CD4-positive, alpha-beta memory T cell (primary cell): ENCODE measurements at regions of chr11 and their contacts with region 1.

Region 1: GRCh38 chr11:6682936-6683861 is at the start of gene MRPL17:
- DNase-seq: peak; percentile 99 to 100 (median 100)
- H3K4me3 ChIP-seq: peak within 1 kb of the TSS; percentile 82 to 99
- H3K4me3 Mint-ChIP-seq: peak within 1 kb of the TSS; percentile 97 to 99 (median 98)
- H3K27ac ChIP-seq: peak within 1 kb of the TSS; percentile 81
- H3K27ac Mint-ChIP-seq: peak within 1 kb of the TSS; percentile 95 to 100 (median 99)
- H3K4me1 ChIP-seq: peaks cover 26% of the 10 kb centered on the region
- H3K4me1 Mint-ChIP-seq: peaks cover 19 to 46% (median 25%) of the 10 kb centered on the region in 4 donors
- H3K27me3 ChIP-seq: no peaks in the 10 kb centered on the region
- H3K27me3 Mint-ChIP-seq: no peaks in the 10 kb centered on the region
- total RNA-seq, gene MRPL17: 33.4 to 36.9 TPM

Region 2: GRCh38 chr11:6251120-6251733 is 432.0 kb before region 1 on chr11:
- CTCF ChIA-PET with region 1: no interaction called
- POLR2A ChIA-PET with region 1: no interaction called
- intact Hi-C with region 1: no loop called
- DNase-seq: peak in 4 of 5 donors; percentile 26 to 35 (median 31)
- H3K4me3 ChIP-seq: no peak overlapping the region
- H3K4me3 Mint-ChIP-seq: no peak overlapping the region
- H3K27ac ChIP-seq: no peak overlapping the region
- H3K27ac Mint-ChIP-seq: no peak overlapping the region
- H3K4me1 ChIP-seq: no peaks in the 10 kb centered on the region
- H3K4me1 Mint-ChIP-seq: no peaks in the 10 kb centered on the region
- H3K27me3 ChIP-seq: no peaks in the 10 kb centered on the region
- H3K27me3 Mint-ChIP-seq: peaks cover 0 to 1% of the 10 kb centered on the region in 2 donors

Region 3: DNA sequence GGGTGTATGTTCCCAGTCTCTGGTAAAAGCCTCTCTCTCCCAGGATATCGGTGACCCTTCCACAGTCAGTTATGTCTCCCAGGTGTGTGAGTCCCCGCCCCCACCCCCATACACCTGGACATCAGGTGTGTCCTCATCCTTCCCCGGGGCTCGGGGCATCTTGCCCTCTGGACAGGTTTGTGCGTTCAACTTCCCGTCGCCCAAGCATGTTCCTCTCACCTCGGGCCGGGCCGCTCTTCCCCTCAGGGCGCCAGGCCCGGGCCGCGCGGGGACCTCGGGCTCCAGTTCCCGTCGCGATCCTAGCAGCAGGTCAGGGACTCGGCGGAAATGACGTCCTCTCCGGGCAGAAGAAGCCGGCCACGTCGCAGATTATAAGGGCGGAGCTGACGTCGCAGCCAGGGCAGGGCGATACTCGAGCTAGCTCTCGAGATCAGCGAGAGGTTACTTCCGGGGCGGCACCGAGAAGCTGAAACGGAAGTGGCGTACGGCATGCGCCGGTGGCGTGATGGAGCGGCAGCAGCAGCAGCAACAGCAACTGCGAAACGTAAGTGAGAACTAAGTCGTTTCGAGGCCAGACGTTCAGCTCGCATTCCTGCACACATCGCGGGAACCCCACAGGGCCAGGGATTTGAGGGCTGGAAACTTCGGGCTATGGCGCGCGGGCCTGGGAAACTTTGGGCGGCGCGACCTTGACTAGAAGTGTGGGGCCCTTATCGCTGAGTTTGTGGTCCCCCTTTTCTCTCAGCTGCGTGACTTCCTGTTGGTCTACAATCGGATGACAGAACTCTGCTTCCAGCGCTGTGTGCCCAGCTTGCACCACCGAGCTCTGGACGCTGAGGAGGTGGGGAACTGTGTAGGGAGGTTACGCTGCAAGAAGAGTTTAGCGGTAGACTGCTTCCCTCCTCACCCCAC is 201.9 kb before region 1 on chr11 and contains the starts of genes ARFIP2 and TIMM10B:
- CTCF ChIA-PET with region 1: interaction called, 14 read pairs
- POLR2A ChIA-PET with region 1: interaction called, 20 read pairs
- intact Hi-C with region 1: loop called (anchors 1 kb)
- DNase-seq: peak; percentile 93 to 98 (median 95)
- H3K4me3 ChIP-seq: peak within 1 kb of the TSS; percentile 83 to 97
- H3K4me3 Mint-ChIP-seq: peak within 1 kb of the TSS; percentile 93 to 98 (median 96)
- H3K27ac ChIP-seq: peak within 1 kb of the TSS; percentile 90
- H3K27ac Mint-ChIP-seq: peak within 1 kb of the TSS; percentile 95 to 99 (median 98)
- H3K4me1 ChIP-seq: peaks cover 46% of the 10 kb centered on the region
- H3K4me1 Mint-ChIP-seq: peaks cover 26 to 44% (median 36%) of the 10 kb centered on the region in 4 donors
- H3K27me3 ChIP-seq: no peaks in the 10 kb centered on the region
- H3K27me3 Mint-ChIP-seq: no peaks in the 10 kb centered on the region
- total RNA-seq, gene ARFIP2: 53.9 to 56.9 TPM
- total RNA-seq, gene TIMM10B: 54.7 to 60.3 TPM

Region 4: GRCh38 chr11:6603287-6604080 is 79.7 kb before region 1 on chr11 and contains the starts of genes ILK and RRP8:
- CTCF ChIA-PET with region 1: interaction called, 109 read pairs
- POLR2A ChIA-PET with region 1: interaction called, 172 read pairs
- intact Hi-C with region 1: loop called (anchors 1 kb)
- DNase-seq: peak; percentile 82 to 86 (median 85)
- H3K4me3 ChIP-seq: peak within 1 kb of the TSS; percentile 94 to 96
- H3K4me3 Mint-ChIP-seq: no peak within 1 kb of the TSS
- H3K27ac ChIP-seq: peak within 1 kb of the TSS; percentile 85
- H3K27ac Mint-ChIP-seq: no peak within 1 kb of the TSS
- H3K4me1 ChIP-seq: peaks cover 62% of the 10 kb centered on the region
- H3K4me1 Mint-ChIP-seq: peaks cover 10 to 34% (median 20%) of the 10 kb centered on the region in 4 donors
- H3K27me3 ChIP-seq: no peaks in the 10 kb centered on the region
- H3K27me3 Mint-ChIP-seq: no peaks in the 10 kb centered on the region
- total RNA-seq, gene ILK: 131 to 132 TPM
- total RNA-seq, gene RRP8: 29.9 to 36.0 TPM

Region 5: DNA sequence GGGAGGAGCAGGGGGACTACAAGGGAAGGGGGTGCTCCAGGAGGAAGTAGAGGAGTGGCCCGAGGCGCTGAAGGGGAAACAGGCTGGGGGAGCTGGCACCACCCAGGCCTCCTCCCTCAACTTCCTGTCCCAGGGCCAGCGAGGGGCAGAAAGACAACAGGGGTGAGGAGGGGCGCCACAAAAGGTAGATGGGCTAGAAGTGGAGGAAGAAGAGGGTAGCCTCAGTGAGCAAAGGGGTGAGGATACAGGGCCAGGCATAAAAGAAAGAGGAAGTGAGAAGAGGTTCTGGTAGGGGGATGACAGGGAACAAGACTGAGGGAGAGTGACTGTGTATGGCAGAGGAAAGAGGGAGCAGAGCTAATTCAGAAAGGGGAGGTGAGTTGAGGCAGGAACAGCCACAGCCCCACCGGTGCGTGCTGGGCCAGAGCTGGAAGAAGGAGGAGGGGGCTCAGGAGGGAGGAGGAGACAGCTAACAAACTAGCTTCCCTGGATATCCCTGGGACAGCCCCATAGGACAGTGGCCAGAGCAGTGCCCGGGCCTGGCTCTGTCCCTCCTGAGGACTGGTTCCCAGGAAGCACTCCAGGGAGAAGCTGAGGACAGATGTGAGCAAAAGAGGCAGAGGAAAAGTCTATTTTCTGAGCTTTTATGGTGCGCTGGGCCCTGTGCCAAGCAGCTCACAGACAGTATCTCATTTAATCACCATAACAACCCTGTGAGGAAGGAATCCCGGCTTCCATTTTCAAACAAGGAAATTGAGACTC is 36.1 kb before region 1 on chr11:
- CTCF ChIA-PET with region 1: interaction called, 16 read pairs
- POLR2A ChIA-PET with region 1: interaction called, 10 read pairs
- intact Hi-C with region 1: no loop called
- DNase-seq: peak in 3 of 5 donors; percentile 22 to 31 (median 22)
- H3K4me3 ChIP-seq: peak overlapping the region; percentile 8 to 26
- H3K4me3 Mint-ChIP-seq: no peak overlapping the region
- H3K27ac ChIP-seq: peak overlapping the region; percentile 54
- H3K27ac Mint-ChIP-seq: no peak overlapping the region
- H3K4me1 ChIP-seq: peaks cover 44% of the 10 kb centered on the region
- H3K4me1 Mint-ChIP-seq: peaks cover 0 to 12% (median 0%) of the 10 kb centered on the region in 4 donors
- H3K27me3 ChIP-seq: no peaks in the 10 kb centered on the region
- H3K27me3 Mint-ChIP-seq: no peaks in the 10 kb centered on the region

Region 6: GRCh38 chr11:6693342-6694228 is 10.4 kb after region 1 on chr11:
- CTCF ChIA-PET with region 1: interaction called, 15 read pairs
- POLR2A ChIA-PET with region 1: interaction called, 4 read pairs
- intact Hi-C with region 1: loop called (anchors 1 kb)
- DNase-seq: peak in 3 of 5 donors; percentile 48 to 78 (median 57)
- H3K4me3 ChIP-seq: no peak overlapping the region
- H3K4me3 Mint-ChIP-seq: peak overlapping the region in 3 of 8 donors; percentile 15 to 69 (median 35)
- H3K27ac ChIP-seq: no peak overlapping the region
- H3K27ac Mint-ChIP-seq: peak overlapping the region; percentile 39 to 89 (median 63)
- H3K4me1 ChIP-seq: peaks cover 25% of the 10 kb centered on the region
- H3K4me1 Mint-ChIP-seq: peaks cover 20 to 44% (median 23%) of the 10 kb centered on the region in 4 donors
- H3K27me3 ChIP-seq: no peaks in the 10 kb centered on the region
- H3K27me3 Mint-ChIP-seq: no peaks in the 10 kb centered on the region

Region 7: GRCh38 chr11:6757373-6757967 is 74.3 kb after region 1 on chr11:
- CTCF ChIA-PET with region 1: interaction called, 21 read pairs
- POLR2A ChIA-PET with region 1: interaction called, 3 read pairs
- intact Hi-C with region 1: no loop called
- DNase-seq: peak; percentile 55 to 62 (median 60)
- H3K4me3 ChIP-seq: no peak overlapping the region
- H3K4me3 Mint-ChIP-seq: no peak overlapping the region
- H3K27ac ChIP-seq: no peak overlapping the region
- H3K27ac Mint-ChIP-seq: no peak overlapping the region
- H3K4me1 ChIP-seq: peaks cover 6% of the 10 kb centered on the region
- H3K4me1 Mint-ChIP-seq: peaks cover 0 to 11% (median 8%) of the 10 kb centered on the region in 4 donors
- H3K27me3 ChIP-seq: no peaks in the 10 kb centered on the region
- H3K27me3 Mint-ChIP-seq: peaks cover 2 to 4% of the 10 kb centered on the region in 2 donors

Region 8: DNA sequence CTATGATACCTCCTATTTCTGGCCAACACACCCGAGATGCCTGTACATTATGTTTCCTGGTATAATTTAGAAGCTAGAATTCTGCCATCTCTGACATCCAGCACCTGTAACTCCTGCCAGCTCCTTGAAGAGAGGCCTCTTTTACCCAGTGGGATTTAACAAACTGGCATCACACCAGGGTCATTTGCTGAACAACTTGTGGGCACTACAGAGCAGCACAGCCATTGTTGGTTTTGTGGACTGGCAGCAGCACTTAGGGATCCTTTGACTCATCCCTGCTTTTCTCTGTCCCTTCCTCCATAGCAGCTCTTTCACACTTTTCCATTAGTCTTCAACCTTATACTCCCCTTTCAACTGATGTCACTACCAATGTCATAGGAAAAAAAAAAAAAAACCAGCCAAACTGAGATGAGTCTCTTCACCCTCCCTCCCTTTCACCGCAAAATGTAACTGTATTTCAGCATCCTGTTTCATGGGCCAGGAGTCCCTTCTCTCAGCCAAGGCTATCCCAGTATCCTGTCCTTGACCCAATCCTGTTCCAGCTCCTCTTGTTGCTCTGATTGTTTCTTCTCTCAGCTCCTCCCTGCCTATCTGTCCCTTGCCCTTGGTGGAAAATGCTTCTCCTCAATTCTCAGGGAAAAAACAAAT is 899.3 kb after region 1 on chr11:
- CTCF ChIA-PET with region 1: no interaction called
- POLR2A ChIA-PET with region 1: no interaction called
- intact Hi-C with region 1: no loop called
- DNase-seq: no peak
- H3K4me3 ChIP-seq: no peak overlapping the region
- H3K4me3 Mint-ChIP-seq: no peak overlapping the region
- H3K27ac ChIP-seq: no peak overlapping the region
- H3K27ac Mint-ChIP-seq: peak overlapping the region in 1 of 7 donors; percentile 15
- H3K4me1 ChIP-seq: peaks cover 14% of the 10 kb centered on the region
- H3K4me1 Mint-ChIP-seq: peaks cover 14 to 16% (median 14%) of the 10 kb centered on the region in 4 donors
- H3K27me3 ChIP-seq: no peaks in the 10 kb centered on the region
- H3K27me3 Mint-ChIP-seq: peaks cover 2 to 5% of the 10 kb centered on the region in 2 donors